Colonic mucosa (tissue), 4 donors: ENCODE measurements at regions of chr5 and their contacts with region 1.

Region 1: GRCh38 chr5:16456103-16456832 is 9.3 kb downstream of the ZNF622 start:
- DNase-seq: no peak
- H3K4me3 ChIP-seq: no peak overlapping the region
- H3K27ac ChIP-seq: no peak overlapping the region
- H3K4me1 ChIP-seq: no peaks in the 10 kb centered on the region
- H3K27me3 ChIP-seq: no peaks in the 10 kb centered on the region
- CTCF ChIP-seq: peak; percentile 50

Region 2: DNA sequence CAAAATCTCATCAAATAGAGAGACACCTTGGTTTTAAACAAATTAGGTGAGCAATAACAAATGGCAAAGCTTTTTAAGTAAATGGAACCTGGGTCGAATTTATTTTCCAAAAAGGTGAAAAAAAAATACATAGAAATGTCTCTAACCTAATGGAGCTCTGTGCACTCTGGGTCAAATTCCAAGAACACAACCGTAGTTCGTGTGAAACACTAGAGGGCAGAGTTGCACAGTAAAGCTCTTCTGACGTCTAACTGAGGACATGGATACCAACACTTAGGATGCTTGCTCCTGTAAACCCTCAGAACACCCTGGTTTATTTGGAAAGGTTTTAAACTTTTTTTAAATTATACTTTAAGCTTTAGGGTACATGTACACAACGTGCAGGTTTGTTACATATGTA is 295.6 kb before region 1 on chr5:
- intact Hi-C with region 1: loop called (anchors 2 kb)
- DNase-seq: peak; percentile 39
- H3K4me3 ChIP-seq: no peak overlapping the region
- H3K27ac ChIP-seq: no peak overlapping the region
- H3K4me1 ChIP-seq: no peaks in the 10 kb centered on the region
- H3K27me3 ChIP-seq: no peaks in the 10 kb centered on the region
- CTCF ChIP-seq: peak; percentile 46

Region 3: DNA sequence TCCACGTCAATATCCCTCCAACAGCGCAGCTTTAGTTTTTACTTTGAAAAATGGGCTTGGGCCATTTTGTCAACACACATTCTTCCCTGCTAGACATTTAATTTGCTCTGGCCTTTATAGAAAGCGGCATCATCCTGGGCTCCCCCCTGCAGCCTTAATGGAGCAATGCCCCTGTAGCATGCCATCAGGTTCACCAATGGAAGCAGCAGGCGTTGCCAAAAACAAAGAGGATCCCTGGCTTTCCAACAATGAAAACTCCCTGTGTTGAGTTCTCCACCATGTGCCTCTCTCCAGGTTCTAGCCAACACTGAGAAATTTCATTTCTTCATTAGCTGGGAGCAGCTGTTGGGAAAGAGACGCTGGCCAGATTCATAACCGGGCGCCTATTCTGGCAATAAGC is 130.1 kb before region 1 on chr5:
- intact Hi-C with region 1: loop called (anchors 5 kb)
- DNase-seq: no peak
- H3K4me3 ChIP-seq: no peak overlapping the region
- H3K27ac ChIP-seq: no peak overlapping the region
- H3K4me1 ChIP-seq: no peaks in the 10 kb centered on the region
- H3K27me3 ChIP-seq: no peaks in the 10 kb centered on the region
- CTCF ChIP-seq: no peak

Region 4: DNA sequence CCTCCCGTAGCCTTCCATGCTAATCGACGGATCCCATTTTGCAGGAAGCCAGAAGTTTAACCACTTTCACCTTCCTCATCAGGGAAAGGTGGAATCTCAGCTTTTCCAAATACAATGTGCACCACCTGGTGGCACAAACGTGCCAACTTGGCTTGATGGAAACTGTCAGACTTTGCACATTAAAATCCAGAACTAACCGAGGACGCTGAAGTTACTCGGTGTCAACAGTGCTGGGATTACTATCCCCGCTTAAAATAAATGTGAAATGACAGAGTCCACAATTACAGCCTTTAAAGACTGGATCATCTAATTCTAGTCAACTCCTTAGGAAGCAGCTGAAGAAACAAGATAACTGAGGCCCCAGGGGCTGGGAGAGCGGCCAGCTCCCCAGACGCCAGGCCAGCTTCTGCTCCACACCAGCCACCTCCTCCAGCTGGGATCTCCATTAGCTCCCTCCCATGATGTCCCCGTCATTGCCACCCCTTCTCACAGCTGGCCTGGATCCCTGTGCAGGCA is 210.7 kb after region 1 on chr5:
- intact Hi-C with region 1: loop called (anchors 10 kb)
- DNase-seq: peak; percentile 57
- H3K4me3 ChIP-seq: no peak overlapping the region
- H3K27ac ChIP-seq: no peak overlapping the region
- H3K4me1 ChIP-seq: no peaks in the 10 kb centered on the region
- H3K27me3 ChIP-seq: no peaks in the 10 kb centered on the region
- CTCF ChIP-seq: peak; percentile 21